ENCODE measurements at regions of chr20 and their contacts with region 1.

Region 1: GRCh38 chr20:32585011-32585518 is at the start of gene NOL4L:
- DNase-seq: peak; percentile 24
- H3K4me3 Mint-ChIP-seq: peak within 1 kb of the TSS; percentile 84
- H3K27ac Mint-ChIP-seq: peak within 1 kb of the TSS; percentile 78
- H3K4me1 Mint-ChIP-seq: peaks cover 21% of the 10 kb centered on the region
- H3K27me3 Mint-ChIP-seq: peaks cover 25% of the 10 kb centered on the region
- total RNA-seq, gene NOL4L: 13.2 and 14.2 TPM in 2 replicates

Region 2: GRCh38 chr20:32484958-32485769 is 99.9 kb before region 1 on chr20:
- intact Hi-C with region 1: no loop called
- DNase-seq: peak; percentile 76
- H3K4me3 Mint-ChIP-seq: peak overlapping the region; percentile 89
- H3K27ac Mint-ChIP-seq: peak overlapping the region; percentile 85
- H3K4me1 Mint-ChIP-seq: peaks cover 9% of the 10 kb centered on the region
- H3K27me3 Mint-ChIP-seq: no peaks in the 10 kb centered on the region

Region 3: DNA sequence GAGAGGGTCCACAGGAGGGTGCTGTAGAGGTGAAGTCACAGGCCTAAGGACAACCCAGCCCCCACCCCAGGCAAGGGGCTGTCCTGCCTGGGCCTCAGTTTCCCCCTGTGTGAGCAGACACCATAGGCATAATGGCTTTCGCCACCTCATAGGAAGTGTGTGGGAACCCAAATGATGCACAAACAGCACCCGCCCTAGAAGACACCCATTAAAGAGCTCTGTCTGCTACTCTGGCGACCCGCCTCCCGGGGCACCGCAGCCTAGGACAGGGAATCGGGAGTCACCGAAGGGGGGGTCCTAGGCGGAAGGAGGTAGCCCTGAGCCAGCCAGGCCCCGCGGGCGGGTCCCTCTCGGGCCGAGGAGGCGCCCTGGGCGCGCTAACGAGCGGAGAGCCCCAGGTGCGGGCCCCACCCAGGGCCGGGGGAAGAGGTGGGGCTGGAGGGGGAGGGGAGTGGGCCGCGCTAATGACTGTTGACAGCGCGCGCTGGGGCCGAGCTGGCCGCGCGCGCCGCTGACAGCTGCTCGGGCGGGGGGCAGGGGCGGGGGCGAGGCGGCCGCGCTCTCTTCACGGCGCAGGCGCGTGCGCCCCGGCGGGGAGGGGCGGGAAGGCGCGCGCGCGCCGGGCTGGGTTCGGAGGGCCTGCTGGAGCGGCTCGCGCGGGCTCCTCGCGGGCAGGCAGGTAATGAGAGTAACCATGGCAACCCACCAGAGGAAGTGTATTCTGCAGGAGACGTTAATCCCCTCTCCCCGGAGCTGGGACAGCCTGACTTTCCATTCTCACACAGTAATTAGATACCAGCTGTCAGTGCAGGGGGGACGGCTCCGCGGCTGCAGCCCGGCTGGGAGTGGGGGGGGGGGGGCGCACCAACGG is 48.9 kb before region 1 on chr20:
- intact Hi-C with region 1: loop called (anchors 2 kb)
- DNase-seq: peak; percentile 81
- H3K4me3 Mint-ChIP-seq: peak overlapping the region; percentile 66
- H3K27ac Mint-ChIP-seq: peak overlapping the region; percentile 79
- H3K4me1 Mint-ChIP-seq: peaks cover 61% of the 10 kb centered on the region
- H3K27me3 Mint-ChIP-seq: no peaks in the 10 kb centered on the region